GM10248 (cell line): ENCODE measurements at regions of chr3 and their contacts with region 1.

Region 1: GRCh38 chr3:12648384-12648959 is 15.4 kb downstream of the RAF1 start:
- DNase-seq: peak; percentile 30
- CTCF ChIP-seq: no peak

Region 2: GRCh38 chr3:12658593-12659058 is 10.2 kb after region 1 on chr3:
- CTCF ChIA-PET with region 1: interaction called, 10 read pairs
- POLR2A ChIA-PET with region 1: interaction called, 15 read pairs
- DNase-seq: no peak
- CTCF ChIP-seq: no peak